Activated CD4-positive, alpha-beta T cell treated with anti-CD3 and anti-CD28 coated beads for 36 hours (primary cell): ENCODE measurements at regions of chr9 and their contacts with region 1.

Region 1: GRCh38 chr9:128771745-128772519 is at the start of gene ZER1:
- DNase-seq: peak; percentile 97
- ATAC-seq: peak; percentile 94
- H3K4me3 Mint-ChIP-seq: peak within 1 kb of the TSS; percentile 82
- H3K27ac Mint-ChIP-seq: peak within 1 kb of the TSS; percentile 86
- H3K4me1 Mint-ChIP-seq: peaks cover 18% of the 10 kb centered on the region
- H3K27me3 Mint-ChIP-seq: no peaks in the 10 kb centered on the region
- total RNA-seq, gene ZER1: 17.1 to 19.3 TPM

Region 2: DNA sequence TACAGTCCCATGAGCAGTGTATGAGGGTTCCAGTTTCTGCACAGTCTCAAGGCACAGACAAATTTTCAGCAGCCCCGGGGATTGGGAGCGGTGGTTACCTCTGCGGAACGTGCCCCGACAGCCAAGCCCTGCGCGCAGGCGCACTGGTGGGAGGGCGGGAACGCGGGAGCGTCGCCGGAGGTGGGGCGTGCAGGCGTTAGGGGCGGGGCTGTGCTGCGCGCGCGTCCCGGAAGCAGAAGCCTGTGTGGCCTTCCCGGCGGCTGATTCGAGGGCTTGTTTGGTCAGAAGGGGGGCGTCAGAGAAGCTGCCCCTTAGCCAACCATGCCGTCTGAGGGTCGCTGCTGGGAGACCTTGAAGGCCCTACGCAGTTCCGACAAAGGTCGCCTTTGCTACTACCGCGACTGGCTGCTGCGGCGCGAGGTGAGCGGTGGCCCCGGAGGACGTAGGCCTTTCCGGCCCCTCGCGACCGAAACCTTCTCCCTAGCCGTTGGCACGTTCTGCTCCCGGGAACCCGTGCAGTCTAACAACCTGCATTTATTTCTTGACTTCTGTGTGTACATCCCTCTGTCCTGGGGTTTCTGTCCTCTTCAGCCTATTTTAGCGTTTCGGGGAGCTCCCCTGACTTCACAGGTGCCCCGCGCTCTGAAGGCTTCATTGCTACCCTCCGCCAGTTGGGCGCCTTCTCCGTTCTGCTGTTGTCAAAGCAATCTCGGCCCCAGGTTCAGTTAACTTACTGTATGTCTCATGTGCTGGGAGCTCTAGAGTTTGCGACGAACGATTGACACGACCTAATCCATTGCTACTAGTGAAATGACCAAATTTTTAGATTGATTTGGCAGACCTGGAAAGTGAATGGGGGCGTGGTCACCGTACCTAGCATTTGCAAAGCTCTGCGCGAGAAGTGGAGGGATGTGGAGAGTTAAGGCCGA is 267.2 kb before region 1 on chr9 and contains the start of gene GLE1:
- CTCF ChIA-PET with region 1: no interaction called
- POLR2A ChIA-PET with region 1: no interaction called
- intact Hi-C with region 1: loop called in 1 of 2 experiments (anchors 1 kb)
- DNase-seq: peak; percentile 98
- ATAC-seq: peak; percentile 99
- H3K4me3 Mint-ChIP-seq: peak within 1 kb of the TSS; percentile 95
- H3K27ac Mint-ChIP-seq: peak within 1 kb of the TSS; percentile 99
- H3K4me1 Mint-ChIP-seq: peaks cover 21% of the 10 kb centered on the region
- H3K27me3 Mint-ChIP-seq: no peaks in the 10 kb centered on the region
- total RNA-seq, gene GLE1: 52.5 to 54.4 TPM

Region 3: GRCh38 chr9:128607642-128608350 is 164.1 kb before region 1 on chr9:
- CTCF ChIA-PET with region 1: no interaction called
- POLR2A ChIA-PET with region 1: no interaction called
- intact Hi-C with region 1: no loop called
- DNase-seq: no peak
- ATAC-seq: no peak
- H3K4me3 Mint-ChIP-seq: no peak overlapping the region
- H3K27ac Mint-ChIP-seq: no peak overlapping the region
- H3K4me1 Mint-ChIP-seq: no peaks in the 10 kb centered on the region
- H3K27me3 Mint-ChIP-seq: no peaks in the 10 kb centered on the region

Region 4: GRCh38 chr9:128688512-128689292 is 83.2 kb before region 1 on chr9 and contains the start of gene SET:
- CTCF ChIA-PET with region 1: interaction called, 3 read pairs
- POLR2A ChIA-PET with region 1: interaction called, 4 read pairs
- intact Hi-C with region 1: loop called in 1 of 2 experiments (anchors 1 kb)
- DNase-seq: peak; percentile 96
- ATAC-seq: peak; percentile 71
- H3K4me3 Mint-ChIP-seq: peak within 1 kb of the TSS; percentile 99
- H3K27ac Mint-ChIP-seq: peak within 1 kb of the TSS; percentile 94
- H3K4me1 Mint-ChIP-seq: peaks cover 61% of the 10 kb centered on the region
- H3K27me3 Mint-ChIP-seq: no peaks in the 10 kb centered on the region
- total RNA-seq, gene SET: 673 to 682 TPM

Region 5: DNA sequence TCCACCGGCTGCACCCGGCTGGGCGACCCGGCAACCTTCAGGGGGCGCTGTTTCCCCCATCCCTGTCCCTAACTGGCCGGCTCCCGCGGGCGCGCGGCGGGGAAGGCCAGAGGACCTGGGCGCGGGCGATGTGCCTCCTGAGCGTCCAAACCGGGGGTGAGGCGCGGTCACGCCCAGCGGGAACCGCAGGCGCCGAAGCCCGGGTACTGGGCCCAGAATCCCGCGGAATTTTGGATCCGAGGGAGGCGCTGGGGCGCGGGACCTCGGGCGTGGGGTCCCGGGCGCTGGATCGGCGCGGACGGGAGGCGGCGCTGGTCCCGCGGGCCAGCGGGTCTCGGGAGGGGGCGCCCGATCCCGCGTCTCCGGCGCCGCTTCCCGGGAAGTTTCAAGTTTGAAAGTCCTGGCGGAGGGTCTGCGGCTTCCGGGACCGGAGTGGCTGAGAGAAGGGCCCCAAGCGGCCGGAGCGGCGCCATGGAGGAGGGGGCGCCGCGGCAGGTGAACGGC is 69.4 kb before region 1 on chr9 and contains the start of gene PKN3:
- CTCF ChIA-PET with region 1: interaction called, 3 read pairs
- POLR2A ChIA-PET with region 1: no interaction called
- intact Hi-C with region 1: loop called in 1 of 2 experiments (anchors 1 kb)
- DNase-seq: peak; percentile 95
- ATAC-seq: peak; percentile 85
- H3K4me3 Mint-ChIP-seq: peak within 1 kb of the TSS; percentile 73
- H3K27ac Mint-ChIP-seq: peak within 1 kb of the TSS; percentile 74
- H3K4me1 Mint-ChIP-seq: peaks cover 10% of the 10 kb centered on the region
- H3K27me3 Mint-ChIP-seq: no peaks in the 10 kb centered on the region
- total RNA-seq, gene PKN3: 14.6 to 14.9 TPM

Region 6: DNA sequence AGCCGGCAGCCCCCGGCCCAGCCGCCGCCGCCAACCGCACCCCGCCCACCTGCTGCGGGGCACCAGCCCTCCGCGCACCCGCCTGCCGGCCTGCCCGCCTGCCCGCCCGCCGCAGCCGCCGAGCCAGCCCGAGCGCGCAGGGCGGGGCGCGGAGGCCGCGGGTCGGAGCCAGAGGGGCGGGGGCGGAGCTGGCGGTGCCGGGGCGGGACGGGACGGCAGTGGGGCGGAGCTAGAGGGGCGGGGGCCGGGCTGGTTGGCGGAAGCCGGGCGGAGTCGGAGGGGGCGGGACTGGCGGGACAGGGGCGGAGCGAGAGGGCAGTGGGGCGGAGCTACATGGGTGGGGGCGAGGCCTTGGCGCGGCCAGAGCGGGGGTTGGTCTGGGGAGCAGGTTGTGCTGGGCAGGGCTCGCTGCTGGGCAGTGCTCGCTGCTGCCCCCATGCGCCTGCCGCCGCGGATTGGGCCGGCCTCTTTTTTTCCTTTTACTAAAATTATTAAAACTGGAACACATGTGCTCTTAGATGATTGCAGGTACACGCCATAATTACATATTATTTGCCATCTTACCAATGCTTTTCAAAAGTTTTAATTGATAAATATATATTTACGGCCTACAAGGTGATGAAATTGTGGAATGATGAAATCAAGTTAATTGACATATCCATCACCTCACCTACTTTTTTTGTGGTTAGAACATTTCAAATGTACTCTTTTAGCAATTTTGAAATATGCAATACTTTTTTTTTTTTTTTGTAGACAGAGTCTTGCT is 256.4 kb after region 1 on chr9 and contains the start of gene SH3GLB2:
- CTCF ChIA-PET with region 1: no interaction called
- POLR2A ChIA-PET with region 1: no interaction called
- intact Hi-C with region 1: loop called in 1 of 2 experiments (anchors 2 kb)
- DNase-seq: peak; percentile 98
- ATAC-seq: peak; percentile 93
- H3K4me3 Mint-ChIP-seq: peak within 1 kb of the TSS; percentile 81
- H3K27ac Mint-ChIP-seq: peak within 1 kb of the TSS; percentile 52
- H3K4me1 Mint-ChIP-seq: peaks cover 17% of the 10 kb centered on the region
- H3K27me3 Mint-ChIP-seq: no peaks in the 10 kb centered on the region
- total RNA-seq, gene SH3GLB2: 49.1 to 53.7 TPM